ENCODE measurements at regions of chr14 and their contacts with region 1.

Region 1: DNA sequence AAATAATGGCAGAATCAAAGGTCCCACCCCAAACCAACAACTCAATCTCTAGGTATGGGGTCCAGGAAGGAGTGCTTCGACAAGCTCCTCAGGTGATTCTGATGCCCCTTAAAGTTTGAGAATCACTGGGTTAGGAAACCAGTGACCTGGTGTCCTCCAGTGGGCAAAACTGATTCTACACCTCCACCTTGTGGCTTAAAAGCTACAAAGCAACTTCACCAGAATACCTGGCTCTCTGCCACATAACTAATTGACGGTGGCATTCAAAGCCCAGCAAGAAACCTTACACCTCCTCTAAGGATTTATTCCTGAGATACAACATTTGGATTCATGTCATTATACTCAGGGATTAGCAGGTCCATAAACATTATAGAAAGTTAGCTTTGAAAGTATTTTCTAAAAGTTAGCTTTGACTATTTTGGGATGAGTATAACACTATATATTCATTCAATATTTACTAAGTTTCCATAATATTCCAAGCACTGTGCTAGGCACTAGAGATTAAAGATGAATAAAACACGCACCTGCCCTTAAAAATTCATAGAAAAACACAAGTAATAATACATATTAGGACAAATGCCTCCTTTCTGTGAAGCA is 45.4 kb downstream of the DCAF5 start:
- DNase-seq: no peak
- ATAC-seq: peak; percentile 46 to 70
- H3K4me3 ChIP-seq: no peak overlapping the region
- H3K27ac ChIP-seq: no peak overlapping the region
- H3K4me1 ChIP-seq: peaks cover 4% of the 10 kb centered on the region
- H3K27me3 ChIP-seq: no peaks in the 10 kb centered on the region

Region 2: GRCh38 chr14:68862954-68863594 is 244.4 kb before region 1 on chr14:
- intact Hi-C with region 1: loop called in 3 of 4 experiments (anchors 5 to 10 kb)
- DNase-seq: peak; percentile 78 to 93 (median 88)
- ATAC-seq: peak; percentile 65 to 77
- H3K4me3 ChIP-seq: no peak overlapping the region
- H3K27ac ChIP-seq: no peak overlapping the region
- H3K4me1 ChIP-seq: no peaks in the 10 kb centered on the region
- H3K27me3 ChIP-seq: no peaks in the 10 kb centered on the region

Region 3: DNA sequence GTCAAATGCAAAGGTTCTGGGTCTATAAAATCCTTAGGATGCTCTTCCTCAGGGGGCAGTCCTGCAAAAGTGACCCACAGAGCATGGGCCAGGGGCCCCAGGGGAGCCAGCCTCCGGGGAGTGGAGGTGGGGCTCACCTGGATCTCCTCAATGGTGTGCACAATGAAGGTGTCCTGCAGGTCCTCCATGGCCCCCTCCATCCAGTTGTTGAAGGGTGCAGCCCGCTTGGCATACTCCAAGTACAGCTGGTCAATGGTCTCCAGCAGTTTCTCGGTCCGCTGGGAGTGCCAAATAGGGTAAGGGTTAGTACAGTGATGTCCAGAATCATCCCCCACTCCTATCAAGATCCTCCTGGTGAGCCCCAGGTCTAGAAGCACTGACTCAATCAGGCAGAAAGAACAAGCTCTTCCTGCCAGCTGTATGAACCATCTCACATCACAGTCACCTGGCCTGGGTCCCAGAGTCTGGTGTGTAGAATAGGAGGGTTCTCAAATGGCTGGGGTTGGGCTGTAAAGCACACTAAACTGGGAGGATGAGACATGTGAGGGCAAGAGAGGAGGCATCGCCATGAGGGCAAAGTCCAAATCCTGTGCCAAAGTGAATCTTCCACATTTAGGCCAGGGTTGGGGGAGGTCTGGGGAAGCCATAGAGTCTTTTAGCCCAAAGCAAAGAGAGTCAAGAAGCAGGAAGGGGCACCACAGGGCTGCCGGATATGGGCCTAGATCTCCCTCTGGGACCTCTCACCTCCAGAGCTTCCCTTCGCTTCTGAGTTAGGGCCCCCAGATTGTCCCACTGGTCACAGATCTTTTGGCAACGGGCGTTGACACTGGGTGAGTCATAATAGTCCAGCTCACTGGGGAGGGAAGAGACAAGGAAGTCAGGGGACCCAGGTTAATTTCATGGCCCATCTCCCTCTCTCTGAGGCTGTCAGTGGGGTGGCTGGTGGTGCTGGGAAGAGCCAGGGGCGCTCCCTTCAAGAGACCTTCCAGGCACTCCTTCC is 223.2 kb before region 1 on chr14:
- intact Hi-C with region 1: loop called in 1 of 4 experiments (anchors 10 kb)
- DNase-seq: peak in 2 of 3 donors; percentile 51 to 77
- ATAC-seq: peak; percentile 65 to 73
- H3K4me3 ChIP-seq: no peak overlapping the region
- H3K27ac ChIP-seq: peak overlapping the region; percentile 77
- H3K4me1 ChIP-seq: no peaks in the 10 kb centered on the region
- H3K27me3 ChIP-seq: no peaks in the 10 kb centered on the region

Measured in right cardiac atrium (tissue), 5 donors.